ENCODE measurements at regions of chr2 and their contacts with region 1.

Region 1: DNA sequence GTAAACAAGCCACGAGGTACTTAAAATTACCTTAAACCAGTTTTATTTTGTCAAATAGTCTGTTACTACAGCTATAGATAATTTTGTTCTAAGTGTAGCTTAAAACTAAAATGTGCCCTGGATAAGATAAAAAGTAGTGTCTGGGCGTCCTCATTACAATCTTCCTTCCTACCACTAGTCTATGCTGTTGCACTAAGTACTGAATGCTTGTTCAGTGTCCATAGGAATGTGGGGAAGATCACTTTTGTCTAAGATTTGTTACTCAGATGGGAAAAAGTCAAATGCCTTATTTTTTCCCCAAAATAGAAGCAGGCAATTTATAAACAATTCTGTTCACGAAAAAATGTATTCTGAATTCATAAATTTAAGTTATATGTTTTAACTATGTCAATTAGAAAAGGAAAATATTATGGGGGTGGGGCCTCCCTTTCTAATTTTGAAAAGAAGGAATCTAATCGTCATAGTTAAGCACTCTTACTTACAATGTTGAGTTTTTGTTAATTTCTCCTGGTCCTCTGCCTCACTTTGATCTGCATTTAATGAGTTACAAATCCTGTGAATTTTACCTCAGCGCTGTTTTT is 140.4 kb upstream of the VRK2 start:
- DNase-seq: peak; percentile 69
- ATAC-seq: peak; percentile 99
- H3K4me3 ChIP-seq: no peak overlapping the region
- H3K27ac ChIP-seq: no peak overlapping the region
- H3K4me1 ChIP-seq: no peaks in the 10 kb centered on the region
- H3K27me3 ChIP-seq: no peaks in the 10 kb centered on the region
- CTCF ChIP-seq: peak; percentile 92
- POLR2A ChIP-seq: 0 out of 2 replicates have a peak, but pooled peaks have one; percentile 40
- RAD21 ChIP-seq: peak; percentile 97

Region 2: GRCh38 chr2:57759822-57760300 is 146.4 kb before region 1 on chr2:
- CTCF ChIA-PET with region 1: no interaction called
- POLR2A ChIA-PET with region 1: no interaction called
- dilution Hi-C with region 1: no loop called
- in situ Hi-C with region 1: no loop called
- intact Hi-C with region 1: loop called (anchors 1 kb)
- DNase-seq: peak; percentile 64
- ATAC-seq: peak; percentile 100
- H3K4me3 ChIP-seq: no peak overlapping the region; the same call in 1 of the 2 replicates
- H3K27ac ChIP-seq: no peak overlapping the region
- H3K4me1 ChIP-seq: no peaks in the 10 kb centered on the region
- H3K27me3 ChIP-seq: no peaks in the 10 kb centered on the region
- CTCF ChIP-seq: peak; percentile 91
- POLR2A ChIP-seq: no peak
- RAD21 ChIP-seq: peak; percentile 92

Region 3: DNA sequence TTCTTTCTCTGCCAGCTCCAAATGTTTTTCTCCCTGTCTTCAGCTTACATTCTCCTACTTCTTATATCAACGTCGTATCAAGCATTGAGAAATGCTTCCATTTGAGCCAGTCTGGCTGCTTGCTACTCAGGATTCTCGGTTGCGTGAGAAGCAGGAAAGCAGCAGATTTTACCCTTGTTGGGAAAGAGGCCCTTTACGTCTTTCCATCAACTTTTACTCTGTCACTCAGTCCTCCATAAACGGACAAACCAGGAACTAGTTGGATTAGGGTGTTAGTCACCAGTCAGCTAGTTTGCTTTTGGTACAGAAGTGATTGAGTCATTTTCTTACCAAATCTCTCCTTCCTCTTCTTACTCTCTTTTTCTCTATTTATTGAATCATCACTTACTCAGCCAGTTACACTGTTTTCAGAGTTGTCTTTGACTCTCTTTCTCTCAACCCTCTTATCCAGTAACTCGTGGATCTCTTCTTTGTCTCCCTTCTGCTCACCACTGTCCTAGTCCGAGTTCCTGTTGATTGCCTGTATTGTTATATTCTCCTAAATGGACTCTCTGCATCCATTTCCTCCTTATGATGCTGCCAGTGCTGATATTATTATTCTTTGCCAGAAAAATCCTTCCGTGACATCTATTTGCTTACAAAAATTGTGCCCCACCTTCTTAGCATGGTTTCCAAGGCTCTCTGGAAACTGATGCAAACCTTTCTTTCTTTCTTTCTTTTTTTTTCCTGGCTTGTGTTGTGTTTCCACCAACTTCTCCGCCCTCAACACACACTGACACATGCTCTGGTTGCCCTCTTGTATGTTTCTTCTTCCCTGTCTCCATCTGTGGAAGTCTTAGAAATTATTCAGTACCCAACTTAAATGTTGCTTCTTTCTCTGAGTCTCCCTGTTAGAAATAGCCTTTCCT is 201.8 kb after region 1 on chr2:
- CTCF ChIA-PET with region 1: no interaction called
- POLR2A ChIA-PET with region 1: no interaction called
- dilution Hi-C with region 1: no loop called
- in situ Hi-C with region 1: no loop called
- intact Hi-C with region 1: loop called (anchors 5 kb)
- DNase-seq: peak; percentile 97
- ATAC-seq: peak; percentile 90
- H3K4me3 ChIP-seq: peak overlapping the region; percentile 22; the same call in 1 of the 2 replicates
- H3K27ac ChIP-seq: peak overlapping the region; percentile 96
- H3K4me1 ChIP-seq: peaks cover 7% of the 10 kb centered on the region
- H3K27me3 ChIP-seq: no peaks in the 10 kb centered on the region
- CTCF ChIP-seq: no peak
- POLR2A ChIP-seq: no peak; the same call in 1 of the 2 replicates
- RAD21 ChIP-seq: no peak

Region 4: DNA sequence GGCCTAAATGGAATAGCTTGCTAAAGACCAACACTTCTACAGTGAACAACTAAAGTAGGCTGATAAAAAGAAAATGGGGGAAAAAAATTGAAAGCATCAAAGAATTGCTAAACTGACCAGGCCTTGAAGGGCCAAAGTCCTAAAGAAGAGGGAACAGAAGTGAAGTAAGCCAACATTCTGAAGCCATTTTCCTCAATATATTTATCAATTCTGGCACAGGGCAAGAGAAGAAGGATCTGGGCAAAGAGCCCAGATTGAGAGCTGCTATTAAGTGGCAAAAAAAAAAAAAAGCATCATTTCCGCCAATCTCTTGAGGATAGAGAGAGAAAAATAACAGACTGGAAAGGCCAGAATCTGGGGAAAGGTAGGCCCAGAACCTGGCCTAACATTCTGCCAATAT is 309.2 kb after region 1 on chr2:
- CTCF ChIA-PET with region 1: no interaction called
- POLR2A ChIA-PET with region 1: no interaction called
- dilution Hi-C with region 1: no loop called
- in situ Hi-C with region 1: no loop called
- intact Hi-C with region 1: loop called (anchors 2 kb)
- DNase-seq: peak; percentile 34
- ATAC-seq: no peak
- H3K4me3 ChIP-seq: no peak overlapping the region
- H3K27ac ChIP-seq: no peak overlapping the region
- H3K4me1 ChIP-seq: no peaks in the 10 kb centered on the region
- H3K27me3 ChIP-seq: no peaks in the 10 kb centered on the region
- CTCF ChIP-seq: no peak
- POLR2A ChIP-seq: no peak
- RAD21 ChIP-seq: no peak

Region 5: GRCh38 chr2:58334414-58334813 is 428.2 kb after region 1 on chr2:
- CTCF ChIA-PET with region 1: interaction called, 4 read pairs
- POLR2A ChIA-PET with region 1: no interaction called
- dilution Hi-C with region 1: no loop called
- in situ Hi-C with region 1: no loop called
- intact Hi-C with region 1: loop called (anchors 5 kb)
- DNase-seq: no peak
- ATAC-seq: no peak
- H3K4me3 ChIP-seq: no peak overlapping the region
- H3K27ac ChIP-seq: no peak overlapping the region
- H3K4me1 ChIP-seq: no peaks in the 10 kb centered on the region
- H3K27me3 ChIP-seq: no peaks in the 10 kb centered on the region
- CTCF ChIP-seq: no peak
- POLR2A ChIP-seq: no peak
- RAD21 ChIP-seq: no peak

Region 6: DNA sequence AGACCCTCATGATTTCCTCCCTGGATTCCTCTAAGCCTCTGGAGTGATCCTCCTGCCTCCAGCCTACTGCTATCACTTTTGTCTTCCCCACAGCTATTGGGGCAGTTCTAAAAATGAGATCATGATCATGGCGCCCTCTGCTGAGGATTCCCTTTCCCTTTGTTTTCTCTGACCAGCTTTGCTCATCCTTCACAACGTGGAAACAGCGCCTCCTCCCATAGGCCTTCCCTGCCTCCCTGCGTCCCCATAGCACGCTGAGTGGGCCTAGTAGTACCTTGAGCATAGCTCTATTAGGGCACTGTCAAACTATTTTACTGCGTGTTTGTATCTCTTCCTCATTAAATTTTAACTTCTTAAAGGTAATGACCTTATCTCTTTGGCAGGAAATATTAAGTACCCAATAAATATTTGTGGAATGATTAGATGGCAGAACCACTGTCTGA is 541.8 kb after region 1 on chr2:
- CTCF ChIA-PET with region 1: interaction called, 3 read pairs
- POLR2A ChIA-PET with region 1: no interaction called
- dilution Hi-C with region 1: no loop called
- in situ Hi-C with region 1: no loop called
- intact Hi-C with region 1: loop called (anchors 1 kb)
- DNase-seq: peak; percentile 62
- ATAC-seq: peak; percentile 96
- H3K4me3 ChIP-seq: no peak overlapping the region
- H3K27ac ChIP-seq: no peak overlapping the region
- H3K4me1 ChIP-seq: no peaks in the 10 kb centered on the region
- H3K27me3 ChIP-seq: no peaks in the 10 kb centered on the region
- CTCF ChIP-seq: peak; percentile 70
- POLR2A ChIP-seq: no peak
- RAD21 ChIP-seq: peak; percentile 63

Region 7: GRCh38 chr2:58680755-58681310 is 774.6 kb after region 1 on chr2:
- CTCF ChIA-PET with region 1: interaction called, 3 read pairs
- POLR2A ChIA-PET with region 1: no interaction called
- dilution Hi-C with region 1: no loop called
- in situ Hi-C with region 1: no loop called
- intact Hi-C with region 1: loop called (anchors 2 kb)
- DNase-seq: no peak
- ATAC-seq: no peak
- H3K4me3 ChIP-seq: no peak overlapping the region
- H3K27ac ChIP-seq: no peak overlapping the region
- H3K4me1 ChIP-seq: no peaks in the 10 kb centered on the region
- H3K27me3 ChIP-seq: no peaks in the 10 kb centered on the region
- CTCF ChIP-seq: no peak
- POLR2A ChIP-seq: no peak
- RAD21 ChIP-seq: no peak